Ovary (tissue), 10 donors: ENCODE measurements at regions of chr17 and their contacts with region 1.

Region 1: DNA sequence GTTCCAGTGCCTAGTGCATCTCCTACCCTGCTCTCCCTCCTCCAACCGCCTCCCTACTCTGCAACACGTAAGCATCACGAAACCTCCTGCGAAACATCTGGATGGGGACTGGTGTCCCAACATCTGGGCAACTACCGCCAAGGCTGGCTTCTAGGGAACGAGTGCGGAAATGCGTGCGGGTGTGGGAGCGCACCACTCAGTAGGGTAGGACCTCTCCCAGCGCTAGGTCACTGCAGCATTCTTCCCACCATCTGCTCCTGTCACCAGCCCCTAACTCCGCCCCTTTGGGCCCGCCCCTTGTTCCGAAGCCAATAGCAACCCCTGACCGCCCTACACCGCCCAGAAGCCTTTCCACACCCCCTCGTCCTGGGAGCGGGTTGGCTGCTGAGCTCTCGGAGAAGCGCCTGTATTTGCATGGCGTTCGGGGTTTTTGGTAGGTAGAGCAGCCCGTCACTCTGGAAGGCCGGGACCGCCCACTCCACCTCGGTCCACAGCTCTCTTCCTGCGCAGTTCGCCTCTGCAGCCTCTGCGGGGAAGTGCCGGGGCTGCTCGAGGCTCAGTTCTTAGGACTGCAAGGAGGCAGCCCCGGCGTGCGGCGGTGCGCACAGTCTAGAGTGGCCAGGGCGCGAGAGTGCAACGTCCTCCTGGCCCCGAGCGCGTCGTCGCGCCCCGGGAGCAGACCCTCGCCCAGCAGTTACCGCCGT is at the start of gene HS3ST3B1:
- DNase-seq: peak; percentile 97 to 99 (median 99)
- H3K4me3 ChIP-seq: peak within 1 kb of the TSS; percentile 48
- H3K27ac ChIP-seq: peak within 1 kb of the TSS; percentile 62 to 76
- H3K4me1 ChIP-seq: peaks cover 9% of the 10 kb centered on the region
- H3K27me3 ChIP-seq: no peaks in the 10 kb centered on the region
- CTCF ChIP-seq: peak in 1 of 3 donors; percentile 51
- EP300 ChIP-seq: no peak
- POLR2A ChIP-seq: peak; percentile 39
- total RNA-seq, gene HS3ST3B1: 3.9 to 9.9 (median 6.9) TPM

Region 2: GRCh38 chr17:13024526-13025257 is 1276.0 kb before region 1 on chr17:
- intact Hi-C with region 1: loop called in 2 of 4 experiments (anchors 10 kb)
- DNase-seq: peak; percentile 42 to 79 (median 65)
- H3K4me3 ChIP-seq: peak overlapping the region; percentile 10
- H3K27ac ChIP-seq: no peak overlapping the region
- H3K4me1 ChIP-seq: no peaks in the 10 kb centered on the region
- H3K27me3 ChIP-seq: no peaks in the 10 kb centered on the region
- CTCF ChIP-seq: peak; percentile 52 to 86 (median 63)
- EP300 ChIP-seq: no peak
- POLR2A ChIP-seq: no peak

Region 3: GRCh38 chr17:13337864-13338371 is 962.8 kb before region 1 on chr17:
- intact Hi-C with region 1: loop called in 1 of 4 experiments (anchors 10 kb)
- DNase-seq: peak in 2 of 5 donors; percentile 16 to 24
- H3K4me3 ChIP-seq: no peak overlapping the region
- H3K27ac ChIP-seq: no peak overlapping the region
- H3K4me1 ChIP-seq: no peaks in the 10 kb centered on the region
- H3K27me3 ChIP-seq: no peaks in the 10 kb centered on the region
- CTCF ChIP-seq: peak in 2 of 3 donors; percentile 35 to 66
- EP300 ChIP-seq: no peak
- POLR2A ChIP-seq: no peak

Region 4: GRCh38 chr17:13594762-13595598 is 705.7 kb before region 1 on chr17:
- intact Hi-C with region 1: loop called (anchors 2 to 10 kb)
- DNase-seq: peak; percentile 54 to 78 (median 69)
- H3K4me3 ChIP-seq: no peak overlapping the region
- H3K27ac ChIP-seq: no peak overlapping the region
- H3K4me1 ChIP-seq: peaks cover 2% of the 10 kb centered on the region
- H3K27me3 ChIP-seq: no peaks in the 10 kb centered on the region
- CTCF ChIP-seq: peak in 2 of 3 donors; percentile 58 to 73
- EP300 ChIP-seq: no peak
- POLR2A ChIP-seq: no peak

Region 5: GRCh38 chr17:13601776-13602551 is 698.8 kb before region 1 on chr17 and contains the start of gene HS3ST3A1:
- intact Hi-C with region 1: loop called in 2 of 4 experiments (anchors 5 to 10 kb)
- DNase-seq: peak; percentile 73 to 85 (median 80)
- H3K4me3 ChIP-seq: peak within 1 kb of the TSS; percentile 42
- H3K27ac ChIP-seq: peak within 1 kb of the TSS; percentile 65 to 70
- H3K4me1 ChIP-seq: no peaks in the 10 kb centered on the region
- H3K27me3 ChIP-seq: no peaks in the 10 kb centered on the region
- CTCF ChIP-seq: no peak
- EP300 ChIP-seq: no peak
- POLR2A ChIP-seq: peak; percentile 40
- total RNA-seq, gene HS3ST3A1: 4.1 to 41.4 (median 11.0) TPM

Region 6: GRCh38 chr17:14359163-14360020 is 58.7 kb after region 1 on chr17:
- intact Hi-C with region 1: no loop called
- DNase-seq: no peak
- H3K4me3 ChIP-seq: no peak overlapping the region
- H3K27ac ChIP-seq: no peak overlapping the region
- H3K4me1 ChIP-seq: no peaks in the 10 kb centered on the region
- H3K27me3 ChIP-seq: no peaks in the 10 kb centered on the region
- CTCF ChIP-seq: no peak
- EP300 ChIP-seq: no peak
- POLR2A ChIP-seq: no peak